ENCODE measurements at regions of chr3 and their contacts with region 1.

Region 1: DNA sequence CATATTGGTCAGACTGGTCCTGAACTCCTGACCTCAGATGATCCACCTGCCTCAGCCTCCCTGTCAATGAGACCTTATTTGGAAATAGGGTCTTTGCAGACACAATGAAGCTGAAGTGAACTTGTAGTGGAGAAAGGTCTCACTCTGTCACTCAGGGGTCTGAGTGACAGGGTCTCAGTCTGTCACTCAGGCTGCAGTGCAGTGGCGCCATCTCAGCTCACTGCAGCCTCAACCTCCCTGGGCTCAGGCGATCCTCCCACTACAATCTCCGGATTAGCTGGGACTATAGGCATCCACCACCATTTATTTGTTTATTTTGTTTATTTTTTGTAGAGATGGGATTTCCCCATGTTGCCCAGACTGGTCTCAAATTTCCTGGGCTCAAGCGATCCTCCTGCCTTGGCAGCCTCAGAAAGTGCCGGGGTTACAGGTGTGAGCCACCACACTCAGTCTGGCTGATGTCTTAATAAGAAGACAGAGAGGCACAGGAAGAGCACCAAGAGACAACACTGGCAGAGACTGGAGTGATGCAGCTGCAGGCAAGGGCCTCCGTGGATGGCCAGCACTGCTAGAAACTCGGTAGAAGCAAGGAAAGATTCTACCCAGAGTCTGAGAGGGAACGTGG is 26.2 kb upstream of the RAF1 start:
- DNase-seq: no peak

Region 2: GRCh38 chr3:12370758-12371157 is 319.3 kb before region 1 on chr3:
- intact Hi-C with region 1: no loop called
- DNase-seq: no peak

Region 3: GRCh38 chr3:12444582-12445468 is 245.3 kb before region 1 on chr3:
- intact Hi-C with region 1: no loop called
- DNase-seq: peak; percentile 69

Region 4: GRCh38 chr3:13016083-13016720 is 326.1 kb after region 1 on chr3:
- intact Hi-C with region 1: loop called in 1 of 2 experiments (anchors 5 kb)
- DNase-seq: peak; percentile 87

Measured in posterior vena cava (tissue), 2 donors.